ENCODE measurements at regions of chr20 and their contacts with region 1.

Region 1: GRCh38 chr20:24359321-24360027 is 110.0 kb upstream of the SYNDIG1 start:
- DNase-seq: no peak
- ATAC-seq: no peak
- H3K4me3 Mint-ChIP-seq: no peak overlapping the region
- H3K27ac Mint-ChIP-seq: no peak overlapping the region
- H3K4me1 Mint-ChIP-seq: no peaks in the 10 kb centered on the region
- H3K27me3 Mint-ChIP-seq: no peaks in the 10 kb centered on the region
- CTCF ChIP-seq: no peak

Region 2: DNA sequence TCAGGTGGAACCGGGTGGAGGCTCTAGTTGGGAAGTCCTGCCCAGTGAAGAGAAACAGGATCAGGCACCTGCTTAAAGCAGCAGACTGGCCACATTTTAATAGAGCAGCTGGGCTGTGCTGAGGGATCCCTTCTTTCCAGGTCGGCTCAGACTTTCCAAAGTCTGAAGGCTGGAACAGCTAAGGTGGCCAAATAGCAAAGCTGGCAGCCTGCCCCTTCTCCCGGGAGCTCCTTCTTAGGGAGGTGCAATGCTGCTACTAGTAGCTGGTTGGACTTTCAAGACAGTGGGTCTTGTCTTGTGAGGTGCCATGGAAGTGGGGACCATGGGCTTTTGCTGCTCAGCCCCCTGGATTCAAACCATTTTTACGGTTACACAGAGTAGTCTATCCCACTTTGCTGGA is 449.3 kb before region 1 on chr20:
- CTCF ChIA-PET with region 1: no interaction called
- POLR2A ChIA-PET with region 1: no interaction called
- intact Hi-C with region 1: no loop called
- DNase-seq: no peak
- ATAC-seq: no peak
- H3K4me3 Mint-ChIP-seq: no peak overlapping the region
- H3K27ac Mint-ChIP-seq: no peak overlapping the region
- H3K4me1 Mint-ChIP-seq: no peaks in the 10 kb centered on the region
- H3K27me3 Mint-ChIP-seq: no peaks in the 10 kb centered on the region
- CTCF ChIP-seq: no peak

Region 3: DNA sequence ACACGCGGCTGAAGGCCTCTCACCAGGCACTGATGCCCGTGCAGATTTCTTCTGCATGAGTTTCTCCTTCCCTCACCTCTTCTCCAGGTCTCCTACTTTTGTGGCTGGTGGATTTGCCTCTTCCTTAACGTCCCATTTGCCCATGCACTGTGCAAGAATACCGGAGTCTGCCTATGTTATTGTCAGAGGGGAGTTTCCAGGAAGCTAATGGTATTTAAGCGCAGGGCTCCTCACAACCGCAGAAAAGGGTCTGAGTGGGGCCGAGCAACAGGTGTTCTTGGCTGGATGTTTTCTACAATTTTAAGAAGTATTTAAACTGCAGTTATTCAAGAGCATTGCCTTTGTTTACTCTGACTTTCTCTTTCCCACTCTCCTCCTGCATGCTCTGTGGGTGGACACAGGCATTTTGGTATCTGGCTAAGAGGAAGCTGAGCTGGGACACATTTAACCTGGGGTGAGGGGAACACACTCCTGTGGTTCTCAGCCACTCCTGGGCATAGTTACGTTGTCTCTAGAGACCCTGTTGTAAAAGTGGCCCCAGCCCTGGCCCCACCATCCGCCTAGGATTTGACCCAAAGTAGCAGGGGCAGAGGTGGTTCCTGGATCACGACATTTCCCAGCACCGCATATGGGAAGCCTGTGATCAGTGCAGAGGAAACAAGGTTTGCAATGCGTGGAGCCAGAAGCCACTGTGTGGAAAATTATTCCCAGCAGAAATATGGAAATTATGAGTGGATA is 405.3 kb before region 1 on chr20:
- CTCF ChIA-PET with region 1: no interaction called
- POLR2A ChIA-PET with region 1: no interaction called
- intact Hi-C with region 1: no loop called
- DNase-seq: no peak
- ATAC-seq: no peak
- H3K4me3 Mint-ChIP-seq: no peak overlapping the region
- H3K27ac Mint-ChIP-seq: no peak overlapping the region
- H3K4me1 Mint-ChIP-seq: no peaks in the 10 kb centered on the region
- H3K27me3 Mint-ChIP-seq: peaks cover 6% of the 10 kb centered on the region
- CTCF ChIP-seq: no peak

Region 4: GRCh38 chr20:24328901-24329300 is 30.6 kb before region 1 on chr20:
- CTCF ChIA-PET with region 1: no interaction called
- POLR2A ChIA-PET with region 1: no interaction called
- intact Hi-C with region 1: no loop called
- DNase-seq: no peak
- ATAC-seq: no peak
- H3K4me3 Mint-ChIP-seq: no peak overlapping the region
- H3K27ac Mint-ChIP-seq: no peak overlapping the region
- H3K4me1 Mint-ChIP-seq: peaks cover 5% of the 10 kb centered on the region
- H3K27me3 Mint-ChIP-seq: no peaks in the 10 kb centered on the region
- CTCF ChIP-seq: no peak

Region 5: DNA sequence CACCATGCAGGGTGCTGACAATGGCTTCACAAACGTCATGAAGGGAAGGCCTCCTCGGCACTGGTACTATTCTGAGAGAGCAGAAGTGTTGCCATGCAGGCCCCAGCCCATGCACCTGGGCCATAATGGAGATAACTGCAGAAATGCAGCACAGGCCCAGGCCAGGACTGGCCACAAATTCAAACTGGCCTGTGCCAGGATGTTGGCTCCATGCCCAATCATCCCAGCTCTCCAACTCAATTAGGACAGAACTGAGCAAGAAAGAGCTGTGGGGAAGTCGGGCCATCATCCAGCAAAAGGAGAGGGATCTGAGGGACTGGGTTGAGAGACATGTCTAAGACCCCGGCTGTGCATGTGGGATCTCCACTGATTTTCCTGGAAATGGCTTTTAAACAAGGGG is 61.1 kb after region 1 on chr20:
- CTCF ChIA-PET with region 1: no interaction called
- POLR2A ChIA-PET with region 1: no interaction called
- intact Hi-C with region 1: loop called (anchors 10 kb)
- DNase-seq: no peak
- ATAC-seq: no peak
- H3K4me3 Mint-ChIP-seq: no peak overlapping the region
- H3K27ac Mint-ChIP-seq: no peak overlapping the region
- H3K4me1 Mint-ChIP-seq: no peaks in the 10 kb centered on the region
- H3K27me3 Mint-ChIP-seq: no peaks in the 10 kb centered on the region
- CTCF ChIP-seq: no peak

Measured in activated CD8-positive, alpha-beta T cell treated with anti-CD3 and anti-CD28 coated beads for 36 hours (primary cell).